ENCODE measurements at regions of chr19 and their contacts with region 1.

Region 1: GRCh38 chr19:3762501-3763459 is at the start of gene MRPL54:
- DNase-seq: peak; percentile 97 to 100 (median 100)
- ATAC-seq: peak; percentile 84 to 86
- H3K4me3 Mint-ChIP-seq: peak within 1 kb of the TSS; percentile 97 to 100 (median 98)
- H3K27ac Mint-ChIP-seq: peak within 1 kb of the TSS; percentile 100
- H3K4me1 Mint-ChIP-seq: peaks cover 19 to 58% (median 48%) of the 10 kb centered on the region in 4 donors
- H3K27me3 Mint-ChIP-seq: peaks cover 0 to 4% (median 0%) of the 10 kb centered on the region in 5 donors
- polyA plus RNA-seq, gene MRPL54: 92.5 to 168 (median 120) TPM

Region 2: GRCh38 chr19:3687774-3688706 is 74.7 kb before region 1 on chr19:
- POLR2A ChIA-PET with region 1: interaction called, 18 read pairs
- DNase-seq: peak in 6 of 10 donors; percentile 36 to 70 (median 50)
- ATAC-seq: peak; percentile 78 to 80
- H3K4me3 Mint-ChIP-seq: peak overlapping the region; percentile 78 to 98 (median 88)
- H3K27ac Mint-ChIP-seq: peak overlapping the region; percentile 85 to 98 (median 94)
- H3K4me1 Mint-ChIP-seq: peaks cover 27 to 56% (median 50%) of the 10 kb centered on the region in 4 donors
- H3K27me3 Mint-ChIP-seq: no peaks in the 10 kb centered on the region

Region 3: GRCh38 chr19:3738477-3739220 is 24.1 kb before region 1 on chr19:
- POLR2A ChIA-PET with region 1: interaction called, 21 read pairs
- DNase-seq: no peak
- ATAC-seq: no peak
- H3K4me3 Mint-ChIP-seq: peak overlapping the region in 5 of 10 donors; percentile 27 to 43 (median 34)
- H3K27ac Mint-ChIP-seq: peak overlapping the region in 8 of 10 donors; percentile 65 to 94 (median 88)
- H3K4me1 Mint-ChIP-seq: peaks cover 5 to 22% (median 16%) of the 10 kb centered on the region in 4 donors
- H3K27me3 Mint-ChIP-seq: no peaks in the 10 kb centered on the region

Region 4: GRCh38 chr19:3809881-3810707 is 47.3 kb after region 1 on chr19:
- POLR2A ChIA-PET with region 1: interaction called, 57 read pairs
- DNase-seq: no peak
- ATAC-seq: no peak
- H3K4me3 Mint-ChIP-seq: no peak overlapping the region
- H3K27ac Mint-ChIP-seq: peak overlapping the region in 3 of 10 donors; percentile 7 to 86 (median 67)
- H3K4me1 Mint-ChIP-seq: peaks cover 20 to 66% (median 52%) of the 10 kb centered on the region in 4 donors
- H3K27me3 Mint-ChIP-seq: no peaks in the 10 kb centered on the region

Region 5: DNA sequence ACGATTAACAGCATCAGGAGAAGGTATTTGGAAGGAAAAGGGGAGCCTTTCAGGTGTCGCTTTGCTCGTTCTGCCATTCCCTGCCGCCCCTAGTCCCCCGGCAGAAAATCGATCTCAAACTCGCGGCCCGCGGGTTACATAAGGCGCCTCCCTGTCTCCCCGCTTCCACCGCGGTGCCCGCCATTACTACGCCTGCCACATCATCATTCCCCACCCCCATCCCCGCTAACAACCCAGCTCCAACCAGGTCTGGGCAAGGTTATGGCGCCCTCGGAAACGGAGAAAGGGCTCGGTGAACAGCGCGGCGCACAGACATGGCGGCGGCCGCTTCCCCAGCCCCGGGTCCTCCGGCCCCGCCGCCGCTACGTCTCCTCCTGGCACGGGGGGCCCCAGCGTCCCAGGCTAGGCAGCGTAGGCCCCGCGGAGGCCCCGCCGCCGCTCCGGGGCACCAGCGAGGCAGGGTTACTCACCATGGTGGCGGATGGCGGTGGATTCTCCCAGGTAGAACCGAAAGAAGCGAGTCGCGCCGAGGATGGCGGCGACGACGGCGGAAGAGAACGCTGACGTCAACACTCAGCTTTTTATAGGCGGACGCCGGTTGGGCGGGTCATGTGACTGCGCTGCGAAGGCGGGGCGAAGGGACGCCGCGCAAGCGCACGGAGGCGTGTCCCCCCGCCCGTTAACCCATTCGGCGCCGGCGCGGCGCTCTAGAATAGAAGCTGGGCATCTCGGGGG is 222.3 kb after region 1 on chr19 and contains the start of gene EEF2:
- POLR2A ChIA-PET with region 1: interaction called, 11 read pairs
- DNase-seq: peak; percentile 84 to 97 (median 92)
- ATAC-seq: peak; percentile 57 to 64
- H3K4me3 Mint-ChIP-seq: peak within 1 kb of the TSS; percentile 92 to 99 (median 97)
- H3K27ac Mint-ChIP-seq: peak within 1 kb of the TSS; percentile 92 to 98 (median 97)
- H3K4me1 Mint-ChIP-seq: peaks cover 14 to 67% (median 49%) of the 10 kb centered on the region in 4 donors
- H3K27me3 Mint-ChIP-seq: no peaks in the 10 kb centered on the region
- polyA plus RNA-seq, gene EEF2: 546 to 682 (median 600) TPM